ENCODE measurements at regions of chr10 and their contacts with region 1.

Region 1: GRCh38 chr10:58952747-58953466 is 223.5 kb upstream of the PHYHIPL start:
- DNase-seq: peak; percentile 36
- H3K4me3 ChIP-seq: no peak overlapping the region
- H3K27ac ChIP-seq: peak overlapping the region; percentile 11 to 61 (median 42)
- H3K4me1 ChIP-seq: peaks cover 0 to 4% (median 2%) of the 10 kb centered on the region in 4 donors
- H3K27me3 ChIP-seq: no peaks in the 10 kb centered on the region
- CTCF ChIP-seq: peak; percentile 65 to 80 (median 73)
- EP300 ChIP-seq: no peak
- POLR2A ChIP-seq: no peak

Region 2: GRCh38 chr10:58919927-58920654 is 32.8 kb before region 1 on chr10:
- in situ Hi-C with region 1: no loop called
- intact Hi-C with region 1: no loop called
- DNase-seq: no peak
- H3K4me3 ChIP-seq: no peak overlapping the region
- H3K27ac ChIP-seq: no peak overlapping the region
- H3K4me1 ChIP-seq: no peaks in the 10 kb centered on the region
- H3K27me3 ChIP-seq: no peaks in the 10 kb centered on the region
- CTCF ChIP-seq: no peak
- EP300 ChIP-seq: no peak
- POLR2A ChIP-seq: no peak

Region 3: GRCh38 chr10:59181668-59182067 is 228.8 kb after region 1 on chr10:
- in situ Hi-C with region 1: loop called in 1 of 4 experiments (anchors 25 kb)
- intact Hi-C with region 1: no loop called
- DNase-seq: no peak
- H3K4me3 ChIP-seq: no peak overlapping the region
- H3K27ac ChIP-seq: no peak overlapping the region
- H3K4me1 ChIP-seq: peaks cover 0 to 9% (median 5%) of the 10 kb centered on the region in 4 donors
- H3K27me3 ChIP-seq: peaks cover 22% of the 10 kb centered on the region
- CTCF ChIP-seq: peak; percentile 37 to 46 (median 42)
- EP300 ChIP-seq: no peak
- POLR2A ChIP-seq: no peak

Region 4: DNA sequence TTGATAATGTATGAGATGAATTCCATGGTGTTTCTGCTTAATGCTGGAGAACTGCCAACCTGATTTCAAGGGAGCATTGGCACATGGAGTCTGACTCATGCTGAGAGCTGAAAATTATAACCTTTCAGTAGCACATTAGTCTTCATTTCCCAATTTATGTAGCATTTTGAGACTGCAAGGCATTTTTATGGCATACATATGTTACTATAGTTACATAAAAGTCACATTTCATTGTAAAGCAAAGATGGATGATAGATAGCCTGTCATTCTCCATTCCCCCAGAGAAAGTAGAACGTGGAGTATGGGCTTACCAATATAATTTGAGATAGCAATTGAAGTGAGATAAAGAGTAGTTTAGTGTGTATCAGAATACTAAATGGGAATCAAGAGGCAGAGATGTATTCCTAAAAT is 653.6 kb after region 1 on chr10:
- in situ Hi-C with region 1: loop called in 2 of 4 experiments (anchors 25 kb)
- intact Hi-C with region 1: no loop called
- DNase-seq: no peak
- H3K4me3 ChIP-seq: no peak overlapping the region
- H3K27ac ChIP-seq: no peak overlapping the region
- H3K4me1 ChIP-seq: peaks cover 0 to 19% (median 10%) of the 10 kb centered on the region in 4 donors
- H3K27me3 ChIP-seq: no peaks in the 10 kb centered on the region
- CTCF ChIP-seq: no peak
- EP300 ChIP-seq: no peak
- POLR2A ChIP-seq: no peak

Measured in transverse colon (tissue), 4 donors.